Heart left ventricle (tissue), 16 donors: ENCODE measurements at regions of chr5 and their contacts with region 1.

Region 1: DNA sequence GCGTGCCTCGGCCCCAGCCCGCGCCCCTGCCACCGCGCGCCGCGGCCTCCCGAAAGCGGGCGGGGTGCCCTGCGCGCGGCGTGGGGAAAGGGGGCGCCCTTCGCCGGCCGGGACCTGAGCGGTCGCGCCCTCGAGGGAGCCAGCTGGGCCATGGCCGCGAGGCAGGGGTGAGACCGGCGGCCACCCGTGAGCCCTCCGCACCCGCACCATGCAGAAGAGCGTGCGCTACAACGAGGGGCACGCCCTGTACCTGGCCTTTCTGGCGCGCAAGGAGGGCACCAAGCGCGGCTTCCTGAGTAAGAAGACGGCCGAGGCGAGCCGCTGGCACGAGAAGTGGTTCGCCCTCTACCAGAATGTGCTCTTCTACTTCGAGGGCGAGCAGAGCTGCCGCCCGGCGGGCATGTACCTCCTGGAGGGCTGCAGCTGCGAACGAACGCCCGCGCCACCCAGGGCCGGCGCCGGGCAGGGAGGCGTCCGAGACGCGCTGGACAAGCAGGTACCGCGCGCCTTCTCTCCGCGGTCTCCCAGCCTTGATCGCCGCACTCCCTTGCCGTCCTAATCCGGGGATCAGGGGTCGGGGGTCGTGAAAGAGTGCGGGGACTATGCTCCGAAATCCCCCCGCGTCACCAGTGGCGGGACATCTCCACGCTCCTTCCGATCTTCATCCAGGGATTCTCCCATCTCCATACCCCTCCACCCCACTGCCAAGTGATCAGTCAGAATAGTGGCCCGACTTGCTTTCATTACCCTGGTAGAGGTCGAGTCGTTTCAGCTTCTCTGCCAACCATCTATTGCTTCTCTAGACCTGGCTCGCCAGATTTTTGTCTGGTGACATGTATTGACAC is 590 bp downstream of the RASGRF2 start:
- DNase-seq: peak; percentile 44 to 66 (median 53)
- ATAC-seq: peak in 3 of 4 donors; percentile 69 to 74 (median 73)
- H3K4me3 ChIP-seq: peak overlapping the region; percentile 46 to 82 (median 67)
- H3K27ac ChIP-seq: peak overlapping the region; percentile 61 to 94 (median 86)
- H3K4me1 ChIP-seq: peaks cover 0 to 21% (median 1%) of the 10 kb centered on the region in 12 donors
- H3K27me3 ChIP-seq: peaks cover 0 to 42% (median 25%) of the 10 kb centered on the region in 9 donors
- CTCF ChIP-seq: peak in 8 of 12 donors; percentile 15 to 49 (median 36)
- POLR2A ChIP-seq: no peak

Region 2: DNA sequence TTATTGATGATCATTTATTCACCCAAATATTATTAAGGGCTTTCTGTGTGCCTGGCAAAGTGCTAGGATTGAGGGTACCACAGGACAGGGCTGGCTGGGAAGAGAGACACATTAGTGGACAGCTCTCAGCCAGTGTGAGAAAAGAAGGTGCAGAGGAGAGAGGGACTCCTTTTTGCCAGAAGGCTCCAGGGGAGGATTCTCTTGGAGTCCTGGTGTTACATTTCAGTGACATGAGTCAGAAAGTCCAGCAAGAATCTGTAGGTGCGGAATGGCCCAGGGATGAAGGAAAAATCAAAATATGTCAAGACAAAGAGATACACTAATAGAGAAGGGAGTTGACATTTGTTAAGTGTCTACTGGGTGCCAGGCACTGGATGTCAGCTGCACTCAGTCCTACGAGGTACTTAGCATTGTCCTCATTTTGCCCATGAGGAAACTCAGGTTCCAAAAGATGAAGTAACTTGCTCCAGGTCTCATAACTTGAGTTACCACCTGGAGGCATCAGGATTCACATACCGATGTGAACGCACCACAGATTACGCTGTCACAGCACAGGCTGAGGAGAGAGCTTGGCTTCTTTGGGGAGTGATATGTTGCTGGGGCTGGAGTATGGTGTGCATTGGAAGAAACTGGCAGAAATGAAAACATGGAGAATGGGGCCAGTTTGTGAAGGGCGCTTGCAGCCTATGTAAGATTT is 59.9 kb after region 1 on chr5:
- intact Hi-C with region 1: loop called in 1 of 10 experiments (anchors 10 kb)
- DNase-seq: no peak
- ATAC-seq: no peak
- H3K4me3 ChIP-seq: no peak overlapping the region
- H3K27ac ChIP-seq: no peak overlapping the region
- H3K4me1 ChIP-seq: peaks cover 0 to 19% (median 0%) of the 10 kb centered on the region in 12 donors
- H3K27me3 ChIP-seq: peaks cover 0 to 10% (median 0%) of the 10 kb centered on the region in 9 donors
- CTCF ChIP-seq: no peak
- POLR2A ChIP-seq: no peak

Region 3: DNA sequence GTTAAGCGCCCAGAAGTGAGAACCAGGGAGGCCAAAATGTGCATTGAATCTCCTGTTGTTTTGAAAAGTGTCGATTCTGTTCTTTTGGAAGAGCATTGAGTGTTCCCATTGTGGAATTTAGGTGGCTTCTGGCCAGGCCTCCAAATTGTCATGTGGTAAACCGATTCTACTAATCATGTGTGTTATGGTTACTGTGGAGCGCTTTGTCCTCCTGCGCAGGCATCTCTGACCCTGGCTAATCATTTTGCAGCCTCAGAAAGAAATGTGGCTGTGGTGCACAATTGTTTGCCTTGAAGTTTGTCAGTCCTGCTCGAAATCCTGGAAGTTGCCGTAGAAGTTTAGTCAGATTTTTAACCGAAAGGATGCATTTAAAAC is 120.7 kb after region 1 on chr5:
- intact Hi-C with region 1: loop called in 3 of 10 experiments (anchors 5 to 10 kb)
- DNase-seq: peak in 4 of 5 donors; percentile 15 to 40 (median 32)
- ATAC-seq: peak; percentile 28 to 70 (median 34)
- H3K4me3 ChIP-seq: peak overlapping the region in 1 of 12 donors; percentile 4
- H3K27ac ChIP-seq: peak overlapping the region in 11 of 12 donors; percentile 3 to 64 (median 52)
- H3K4me1 ChIP-seq: peaks cover 0 to 9% (median 0%) of the 10 kb centered on the region in 12 donors
- H3K27me3 ChIP-seq: no peaks in the 10 kb centered on the region
- CTCF ChIP-seq: no peak
- POLR2A ChIP-seq: no peak

Region 4: GRCh38 chr5:81115261-81115660 is 154.5 kb after region 1 on chr5:
- intact Hi-C with region 1: loop called in 1 of 10 experiments (anchors 10 kb)
- DNase-seq: no peak
- ATAC-seq: no peak
- H3K4me3 ChIP-seq: no peak overlapping the region
- H3K27ac ChIP-seq: no peak overlapping the region
- H3K4me1 ChIP-seq: no peaks in the 10 kb centered on the region
- H3K27me3 ChIP-seq: no peaks in the 10 kb centered on the region
- CTCF ChIP-seq: no peak
- POLR2A ChIP-seq: no peak

Region 5: GRCh38 chr5:81187885-81188284 is 227.1 kb after region 1 on chr5:
- intact Hi-C with region 1: loop called in 1 of 10 experiments (anchors 10 kb)
- DNase-seq: peak; percentile 60 to 79 (median 76)
- ATAC-seq: peak in 3 of 4 donors; percentile 68 to 83 (median 79)
- H3K4me3 ChIP-seq: no peak overlapping the region
- H3K27ac ChIP-seq: peak overlapping the region in 8 of 12 donors; percentile 30 to 67 (median 38)
- H3K4me1 ChIP-seq: peaks cover 0 to 17% (median 1%) of the 10 kb centered on the region in 12 donors
- H3K27me3 ChIP-seq: no peaks in the 10 kb centered on the region
- CTCF ChIP-seq: no peak
- POLR2A ChIP-seq: no peak

Region 6: GRCh38 chr5:81303563-81303962 is 342.8 kb after region 1 on chr5:
- intact Hi-C with region 1: no loop called
- DNase-seq: no peak
- ATAC-seq: no peak
- H3K4me3 ChIP-seq: no peak overlapping the region
- H3K27ac ChIP-seq: no peak overlapping the region
- H3K4me1 ChIP-seq: peaks cover 0 to 42% (median 31%) of the 10 kb centered on the region in 12 donors
- H3K27me3 ChIP-seq: no peaks in the 10 kb centered on the region
- CTCF ChIP-seq: no peak
- POLR2A ChIP-seq: no peak